Activated CD8-positive, alpha-beta T cell treated with anti-CD3 and anti-CD28 coated beads, Interleukin-2, amount 10 ng/mL, durations not matched to agents 7 days and 5 days (primary cell): ENCODE measurements at regions of chr15 and their contacts with region 1.

Region 1: GRCh38 chr15:63188926-63189871 is at the start of gene RAB8B:
- DNase-seq: peak; percentile 98
- ATAC-seq: peak; percentile 88
- H3K4me3 Mint-ChIP-seq: peak within 1 kb of the TSS; percentile 99
- H3K27ac Mint-ChIP-seq: peak within 1 kb of the TSS; percentile 95
- H3K4me1 Mint-ChIP-seq: peaks cover 48% of the 10 kb centered on the region
- H3K27me3 Mint-ChIP-seq: peaks cover 3% of the 10 kb centered on the region
- total RNA-seq, gene RAB8B: 112 to 113 TPM

Region 2: GRCh38 chr15:63135804-63136203 is 53.4 kb before region 1 on chr15:
- CTCF ChIA-PET with region 1: no interaction called
- POLR2A ChIA-PET with region 1: no interaction called
- DNase-seq: no peak
- ATAC-seq: no peak
- H3K4me3 Mint-ChIP-seq: no peak overlapping the region
- H3K27ac Mint-ChIP-seq: no peak overlapping the region
- H3K4me1 Mint-ChIP-seq: no peaks in the 10 kb centered on the region
- H3K27me3 Mint-ChIP-seq: no peaks in the 10 kb centered on the region

Region 3: DNA sequence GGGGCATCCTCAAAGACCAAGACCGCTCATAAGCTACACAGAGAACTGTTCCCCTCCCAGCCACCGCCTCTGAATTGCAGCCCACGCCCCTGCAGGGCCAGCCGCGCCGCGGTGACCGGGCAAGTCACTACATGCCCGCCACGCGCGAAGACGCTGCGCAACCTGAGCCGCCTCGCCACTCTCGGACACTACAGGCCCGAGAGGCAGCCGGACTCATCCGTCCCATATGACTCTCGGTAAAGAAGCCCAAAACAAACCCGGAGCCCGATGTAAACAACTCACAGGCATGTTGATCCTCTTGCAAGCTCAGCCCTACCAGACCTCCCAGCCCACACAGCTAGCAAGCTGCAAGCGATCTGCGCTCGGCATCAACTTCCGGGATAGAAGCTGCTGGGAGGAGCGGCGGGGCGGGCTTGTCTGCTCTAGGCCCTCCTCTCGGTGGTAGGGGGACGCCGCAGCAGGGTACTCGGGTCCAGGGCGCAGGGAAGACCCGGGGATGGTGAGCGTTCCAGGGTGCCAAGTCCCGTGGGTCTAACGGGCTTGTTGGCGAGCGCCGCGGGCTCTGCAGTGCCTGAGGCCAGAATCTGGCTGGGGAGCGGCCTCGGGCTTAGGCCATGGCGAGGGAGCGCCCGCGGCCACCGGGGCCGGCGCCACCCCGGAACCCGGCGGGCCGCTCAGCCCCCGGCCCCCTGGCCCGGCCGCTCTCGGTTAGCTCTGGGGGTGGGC is 31.9 kb before region 1 on chr15 and contains the start of gene RPS27L:
- CTCF ChIA-PET with region 1: interaction called, 11 read pairs
- POLR2A ChIA-PET with region 1: interaction called, 45 read pairs
- DNase-seq: peak; percentile 94
- ATAC-seq: peak; percentile 98
- H3K4me3 Mint-ChIP-seq: peak within 1 kb of the TSS; percentile 97
- H3K27ac Mint-ChIP-seq: peak within 1 kb of the TSS; percentile 94
- H3K4me1 Mint-ChIP-seq: peaks cover 27% of the 10 kb centered on the region
- H3K27me3 Mint-ChIP-seq: no peaks in the 10 kb centered on the region
- total RNA-seq, gene RPS27L: 235 to 238 TPM

Region 4: DNA sequence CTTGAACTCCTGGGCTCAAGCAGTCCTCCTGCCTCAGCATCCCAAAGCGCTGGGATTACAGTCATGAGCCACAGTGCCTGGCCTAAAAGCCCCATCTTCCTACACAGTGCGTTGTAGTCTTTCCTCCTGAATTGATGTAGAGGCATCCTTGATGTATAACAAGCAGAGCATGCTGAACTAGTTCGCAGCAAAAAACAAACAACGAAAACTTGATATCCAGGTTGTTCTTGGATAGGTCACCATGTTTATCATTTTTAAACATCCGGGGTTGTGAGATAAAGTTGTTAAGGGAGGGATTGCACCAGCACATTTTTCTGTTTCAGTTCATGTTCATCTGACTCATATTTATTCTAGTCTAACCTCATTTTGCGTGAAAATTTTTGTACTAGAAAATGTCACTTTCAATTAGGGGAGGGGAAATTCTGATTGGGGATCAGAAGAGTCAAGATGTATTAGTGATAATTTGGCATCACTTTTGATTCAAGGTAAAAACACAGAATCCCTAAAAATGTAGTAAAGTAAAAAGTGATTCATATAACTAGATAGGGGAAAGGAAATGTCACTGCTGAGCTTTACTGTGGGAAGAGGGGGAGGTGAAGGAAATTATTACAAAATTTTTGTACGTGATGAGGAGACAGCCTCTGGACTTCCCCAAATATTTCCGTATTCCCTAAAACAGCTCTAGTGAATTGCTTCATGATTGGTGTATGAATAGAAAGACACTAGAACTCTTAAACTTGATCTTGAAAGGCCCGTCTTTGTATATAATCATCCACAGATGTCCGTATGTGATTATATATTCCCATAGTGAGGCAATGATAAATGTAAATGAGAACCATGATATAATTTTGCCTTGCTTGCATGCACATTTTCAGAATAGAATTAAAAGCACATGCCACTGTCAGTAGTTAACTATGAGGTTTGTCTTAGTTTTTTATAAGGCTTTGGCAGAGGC is 23.1 kb after region 1 on chr15:
- CTCF ChIA-PET with region 1: interaction called, 98 read pairs
- POLR2A ChIA-PET with region 1: interaction called, 58 read pairs
- DNase-seq: no peak
- ATAC-seq: peak; percentile 31
- H3K4me3 Mint-ChIP-seq: peak overlapping the region; percentile 40
- H3K27ac Mint-ChIP-seq: peak overlapping the region; percentile 75
- H3K4me1 Mint-ChIP-seq: peaks cover 71% of the 10 kb centered on the region
- H3K27me3 Mint-ChIP-seq: no peaks in the 10 kb centered on the region

Region 5: GRCh38 chr15:63233667-63234423 is 44.6 kb after region 1 on chr15:
- CTCF ChIA-PET with region 1: interaction called, 15 read pairs
- POLR2A ChIA-PET with region 1: interaction called, 11 read pairs
- DNase-seq: no peak
- ATAC-seq: no peak
- H3K4me3 Mint-ChIP-seq: no peak overlapping the region
- H3K27ac Mint-ChIP-seq: no peak overlapping the region
- H3K4me1 Mint-ChIP-seq: peaks cover 68% of the 10 kb centered on the region
- H3K27me3 Mint-ChIP-seq: no peaks in the 10 kb centered on the region

Region 6: DNA sequence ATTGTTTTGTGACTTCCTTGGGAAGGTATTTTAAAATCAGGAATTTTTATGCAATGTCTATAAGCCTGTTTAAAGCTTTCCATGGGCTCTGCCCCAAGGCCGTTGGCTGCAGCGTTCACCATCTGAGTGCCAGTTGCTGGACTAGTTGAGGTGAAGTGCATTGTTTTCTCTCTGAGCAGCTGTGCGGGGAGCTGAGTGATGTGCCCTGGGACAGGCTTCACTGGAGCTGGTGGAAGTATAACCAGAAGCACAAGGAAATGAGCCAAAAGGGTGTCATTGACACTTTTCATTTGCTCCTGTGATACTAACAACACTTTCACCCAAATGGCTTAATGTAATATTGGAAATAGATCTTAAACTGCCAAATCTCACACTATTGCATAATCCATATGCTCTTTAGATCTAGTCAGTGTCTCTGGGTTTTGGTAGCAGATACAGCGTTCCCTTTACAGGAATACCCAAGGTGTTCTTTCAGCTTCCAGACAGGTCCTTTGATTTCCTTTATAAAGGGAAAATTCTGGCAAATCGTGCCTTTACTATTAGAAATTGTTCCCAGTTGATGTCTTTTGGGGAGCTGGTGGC is 117.4 kb after region 1 on chr15:
- CTCF ChIA-PET with region 1: no interaction called
- POLR2A ChIA-PET with region 1: no interaction called
- DNase-seq: no peak
- ATAC-seq: no peak
- H3K4me3 Mint-ChIP-seq: no peak overlapping the region
- H3K27ac Mint-ChIP-seq: no peak overlapping the region
- H3K4me1 Mint-ChIP-seq: no peaks in the 10 kb centered on the region
- H3K27me3 Mint-ChIP-seq: no peaks in the 10 kb centered on the region

Region 7: GRCh38 chr15:63402498-63403253 is 213.5 kb after region 1 on chr15:
- CTCF ChIA-PET with region 1: interaction called, 10 read pairs
- POLR2A ChIA-PET with region 1: no interaction called
- DNase-seq: peak; percentile 28
- ATAC-seq: peak; percentile 39
- H3K4me3 Mint-ChIP-seq: no peak overlapping the region
- H3K27ac Mint-ChIP-seq: no peak overlapping the region
- H3K4me1 Mint-ChIP-seq: peaks cover 14% of the 10 kb centered on the region
- H3K27me3 Mint-ChIP-seq: peaks cover 2% of the 10 kb centered on the region

Region 8: GRCh38 chr15:63998489-63998888 is 809.3 kb after region 1 on chr15:
- CTCF ChIA-PET with region 1: no interaction called
- POLR2A ChIA-PET with region 1: no interaction called
- DNase-seq: no peak
- ATAC-seq: no peak
- H3K4me3 Mint-ChIP-seq: no peak overlapping the region
- H3K27ac Mint-ChIP-seq: no peak overlapping the region
- H3K4me1 Mint-ChIP-seq: peaks cover 25% of the 10 kb centered on the region
- H3K27me3 Mint-ChIP-seq: peaks cover 11% of the 10 kb centered on the region